MCF 10A (cell line): ENCODE measurements at regions of chr15 and their contacts with region 1.

Region 1: GRCh38 chr15:98035577-98036010 is 75.1 kb downstream of the ARRDC4 start:
- DNase-seq: peak; percentile 50
- H3K4me3 Mint-ChIP-seq: peak overlapping the region; percentile 38
- H3K27ac Mint-ChIP-seq: peak overlapping the region; percentile 83
- H3K4me1 Mint-ChIP-seq: peaks cover 13% of the 10 kb centered on the region
- H3K27me3 Mint-ChIP-seq: no peaks in the 10 kb centered on the region
- CTCF ChIP-seq: no peak

Region 2: DNA sequence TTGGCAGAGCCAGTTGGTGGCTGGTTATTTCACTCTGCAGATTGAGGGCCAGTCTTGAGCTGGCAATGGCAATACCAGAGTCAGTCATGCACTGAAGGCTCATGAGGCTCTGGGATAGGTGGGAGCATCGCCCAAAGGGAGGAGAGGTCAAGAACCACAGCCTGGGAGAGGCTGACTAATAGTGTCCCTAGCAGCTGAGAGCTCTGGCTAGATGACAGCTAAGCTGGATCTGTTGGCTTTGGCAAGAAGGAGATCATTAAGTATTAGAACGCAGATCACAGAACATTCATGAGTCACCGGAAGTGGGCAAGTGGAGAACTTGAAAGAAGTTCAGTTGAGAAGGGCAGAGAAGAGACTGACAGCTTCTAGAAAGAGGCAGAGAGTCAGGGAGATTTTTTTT is 1184.0 kb before region 1 on chr15:
- CTCF ChIA-PET with region 1: no interaction called
- POLR2A ChIA-PET with region 1: no interaction called
- intact Hi-C with region 1: no loop called
- DNase-seq: peak; percentile 82
- H3K4me3 Mint-ChIP-seq: no peak overlapping the region
- H3K27ac Mint-ChIP-seq: no peak overlapping the region
- H3K4me1 Mint-ChIP-seq: peaks cover 15% of the 10 kb centered on the region
- H3K27me3 Mint-ChIP-seq: no peaks in the 10 kb centered on the region
- CTCF ChIP-seq: no peak

Region 3: DNA sequence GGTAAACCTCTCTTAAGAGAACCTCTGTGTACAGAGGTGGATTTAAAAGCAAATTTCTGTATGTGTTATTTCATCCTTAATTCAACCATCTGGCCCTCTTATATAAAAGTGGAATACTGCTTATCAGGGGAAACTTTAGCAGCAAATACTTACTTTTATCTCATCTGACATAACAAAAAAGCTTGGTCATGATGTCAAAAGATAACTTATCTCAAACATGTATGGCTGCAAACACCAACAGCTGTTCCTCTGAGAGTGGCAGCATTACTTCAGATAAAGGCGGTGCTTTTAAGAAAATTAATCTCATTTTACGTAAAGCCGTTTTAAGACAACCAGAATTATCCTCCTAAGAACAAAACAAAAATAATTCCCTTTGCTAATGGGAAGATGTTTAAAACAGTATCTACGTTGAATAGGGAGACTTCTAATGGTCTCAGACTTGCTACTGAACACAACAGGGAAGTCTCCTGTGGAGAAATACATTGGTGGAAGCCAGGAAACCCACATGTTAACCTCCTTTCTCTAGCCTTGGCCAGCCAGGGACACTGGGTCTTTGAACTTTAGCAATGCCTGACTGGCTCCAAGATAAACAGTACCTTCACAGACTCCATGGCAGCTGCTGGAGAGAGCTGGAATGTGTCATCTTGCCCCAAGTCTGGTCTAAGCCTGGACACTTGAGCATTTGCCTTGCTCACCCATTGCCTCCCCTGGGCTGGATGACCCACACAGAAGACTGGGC is 57.0 kb before region 1 on chr15:
- CTCF ChIA-PET with region 1: no interaction called
- POLR2A ChIA-PET with region 1: interaction called, 45 read pairs
- intact Hi-C with region 1: no loop called
- DNase-seq: peak; percentile 64
- H3K4me3 Mint-ChIP-seq: no peak overlapping the region
- H3K27ac Mint-ChIP-seq: peak overlapping the region; percentile 51
- H3K4me1 Mint-ChIP-seq: peaks cover 39% of the 10 kb centered on the region
- H3K27me3 Mint-ChIP-seq: no peaks in the 10 kb centered on the region
- CTCF ChIP-seq: no peak

Region 4: DNA sequence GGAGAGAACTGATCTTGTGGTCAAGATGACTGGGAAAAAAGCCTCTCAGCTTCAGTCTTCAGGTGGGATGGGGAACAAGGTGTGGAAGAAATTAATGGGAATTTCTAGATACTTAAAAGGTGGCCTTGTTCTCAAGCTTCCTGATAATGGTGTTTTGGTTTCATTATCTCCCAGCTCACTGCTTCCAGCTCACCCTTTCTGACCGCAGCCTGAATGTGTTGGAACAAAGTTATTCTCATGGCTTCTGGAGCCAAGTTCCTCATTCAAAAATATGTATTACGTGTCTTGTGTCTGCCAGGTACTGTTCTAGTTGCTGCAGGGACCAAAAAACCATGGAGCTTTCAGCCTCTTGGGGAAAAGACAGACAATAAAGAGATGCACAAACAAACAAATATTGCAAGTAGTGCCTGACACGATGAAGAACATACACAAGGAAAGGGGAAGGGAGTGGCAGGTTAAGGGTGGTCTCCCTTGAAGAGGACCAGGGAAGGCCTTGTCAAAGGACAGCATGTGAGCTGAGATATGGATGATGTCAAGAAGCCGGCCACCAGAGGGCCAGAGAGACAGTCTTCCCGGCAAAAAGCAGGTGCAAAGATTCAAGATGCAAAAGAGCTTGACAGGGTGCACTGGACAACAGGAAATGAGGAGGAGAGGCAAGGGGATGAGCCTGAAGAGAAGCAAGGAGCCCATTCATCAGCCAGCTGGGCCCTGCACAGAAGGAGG is 39.6 kb before region 1 on chr15:
- CTCF ChIA-PET with region 1: interaction called, 9 read pairs
- POLR2A ChIA-PET with region 1: interaction called, 20 read pairs
- intact Hi-C with region 1: loop called (anchors 5 kb)
- DNase-seq: no peak
- H3K4me3 Mint-ChIP-seq: peak overlapping the region; percentile 52
- H3K27ac Mint-ChIP-seq: peak overlapping the region; percentile 87
- H3K4me1 Mint-ChIP-seq: peaks cover 16% of the 10 kb centered on the region
- H3K27me3 Mint-ChIP-seq: no peaks in the 10 kb centered on the region
- CTCF ChIP-seq: peak; percentile 33

Region 5: DNA sequence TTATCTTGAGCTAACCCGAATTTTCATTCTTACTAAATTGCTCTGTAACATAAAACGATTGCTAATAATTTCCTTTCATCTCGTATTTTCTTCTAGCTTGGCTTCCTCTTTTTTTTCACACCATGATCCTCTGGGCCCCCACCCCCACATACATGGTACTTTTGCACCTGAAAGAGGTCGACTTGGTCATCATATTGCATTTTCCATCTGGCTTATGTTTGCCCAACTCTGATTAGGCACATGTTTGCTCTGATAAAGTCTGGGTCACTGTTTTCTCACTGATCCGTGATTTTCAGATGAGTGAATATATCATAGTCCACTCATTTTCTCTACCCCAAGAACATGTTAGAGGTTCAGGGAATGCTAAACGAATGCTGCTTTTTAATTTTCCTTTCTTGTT is 25.6 kb before region 1 on chr15:
- CTCF ChIA-PET with region 1: interaction called, 3 read pairs
- POLR2A ChIA-PET with region 1: interaction called, 12 read pairs
- intact Hi-C with region 1: no loop called
- DNase-seq: no peak
- H3K4me3 Mint-ChIP-seq: no peak overlapping the region
- H3K27ac Mint-ChIP-seq: peak overlapping the region; percentile 9
- H3K4me1 Mint-ChIP-seq: no peaks in the 10 kb centered on the region
- H3K27me3 Mint-ChIP-seq: no peaks in the 10 kb centered on the region
- CTCF ChIP-seq: no peak

Region 6: GRCh38 chr15:98025235-98025634 is 10.4 kb before region 1 on chr15:
- CTCF ChIA-PET with region 1: no interaction called
- POLR2A ChIA-PET with region 1: interaction called, 19 read pairs
- intact Hi-C with region 1: no loop called
- DNase-seq: peak; percentile 56
- H3K4me3 Mint-ChIP-seq: no peak overlapping the region
- H3K27ac Mint-ChIP-seq: no peak overlapping the region
- H3K4me1 Mint-ChIP-seq: peaks cover 17% of the 10 kb centered on the region
- H3K27me3 Mint-ChIP-seq: no peaks in the 10 kb centered on the region
- CTCF ChIP-seq: no peak